ENCODE measurements at regions of chr10 and their contacts with region 1.

Region 1: GRCh38 chr10:129971381-129972144 is 7.5 kb upstream of the EBF3 start:
- DNase-seq: no peak
- ATAC-seq: peak; percentile 99
- H3K4me3 ChIP-seq: no peak overlapping the region
- H3K27ac ChIP-seq: no peak overlapping the region
- H3K4me1 ChIP-seq: no peaks in the 10 kb centered on the region
- H3K27me3 ChIP-seq: no peaks in the 10 kb centered on the region
- CTCF ChIP-seq: 0 out of 6 replicates have a peak, but pooled peaks of 1 of the 3 experiments have one; percentile 9
- POLR2A ChIP-seq: no peak
- RAD21 ChIP-seq: peak; percentile 44

Region 2: DNA sequence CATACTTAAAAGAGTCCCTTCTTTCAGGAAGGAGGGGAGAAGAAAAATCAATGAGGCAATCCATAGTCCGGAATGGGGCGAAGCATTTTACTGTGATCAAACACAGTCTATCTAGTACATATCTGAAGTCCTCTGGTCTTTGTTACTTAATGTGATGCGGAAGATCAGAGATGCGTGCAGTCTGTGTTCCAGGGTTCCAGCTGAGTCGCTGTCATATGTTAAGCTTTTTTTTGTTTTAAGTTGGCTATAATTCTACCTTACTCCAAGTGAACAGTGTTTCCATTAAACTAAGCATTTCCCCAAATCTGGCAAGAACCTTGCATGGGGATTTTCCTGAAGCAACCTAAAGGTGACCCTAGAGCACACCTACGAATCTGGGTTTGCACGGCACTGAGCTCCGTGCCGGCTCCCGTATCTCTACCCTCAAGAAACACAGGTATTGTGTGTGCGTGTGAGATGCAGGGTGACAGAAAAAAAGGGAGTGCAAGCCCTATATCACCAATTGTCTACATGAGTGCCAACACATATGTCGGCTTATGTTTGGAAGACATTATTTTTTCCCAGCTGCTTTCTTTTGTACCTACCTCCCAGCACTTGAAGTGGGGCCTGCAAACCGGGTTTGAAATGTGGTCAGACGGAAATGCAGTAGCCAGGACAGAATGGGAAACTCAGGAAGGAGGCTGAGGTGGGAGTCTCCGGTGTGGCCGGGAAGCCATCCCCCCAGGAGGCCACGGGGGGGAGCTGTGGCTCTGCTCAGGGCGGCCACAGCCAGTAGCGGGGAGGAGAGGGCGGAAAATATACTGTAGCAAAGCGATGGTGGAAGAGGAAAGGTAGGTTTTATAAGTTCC is 940.3 kb before region 1 on chr10:
- CTCF ChIA-PET with region 1: no interaction called
- POLR2A ChIA-PET with region 1: no interaction called
- RAD21 ChIA-PET with region 1: no interaction called
- intact Hi-C with region 1: loop called (anchors 5 kb)
- DNase-seq: no peak
- ATAC-seq: peak; percentile 94
- H3K4me3 ChIP-seq: no peak overlapping the region
- H3K27ac ChIP-seq: no peak overlapping the region
- H3K4me1 ChIP-seq: no peaks in the 10 kb centered on the region
- H3K27me3 ChIP-seq: no peaks in the 10 kb centered on the region; the same call in 1 of the 2 replicates
- CTCF ChIP-seq: peak; percentile 45 to 96 (median 83); a peak in 5 of 6 replicates
- POLR2A ChIP-seq: no peak
- RAD21 ChIP-seq: peak; percentile 85

Region 3: GRCh38 chr10:129768437-129769355 is 202.9 kb before region 1 on chr10:
- CTCF ChIA-PET with region 1: no interaction called
- POLR2A ChIA-PET with region 1: no interaction called
- RAD21 ChIA-PET with region 1: no interaction called
- intact Hi-C with region 1: no loop called
- DNase-seq: no peak
- ATAC-seq: no peak
- H3K4me3 ChIP-seq: no peak overlapping the region
- H3K27ac ChIP-seq: no peak overlapping the region
- H3K4me1 ChIP-seq: no peaks in the 10 kb centered on the region
- H3K27me3 ChIP-seq: no peaks in the 10 kb centered on the region
- CTCF ChIP-seq: no peak
- POLR2A ChIP-seq: no peak
- RAD21 ChIP-seq: no peak

Region 4: DNA sequence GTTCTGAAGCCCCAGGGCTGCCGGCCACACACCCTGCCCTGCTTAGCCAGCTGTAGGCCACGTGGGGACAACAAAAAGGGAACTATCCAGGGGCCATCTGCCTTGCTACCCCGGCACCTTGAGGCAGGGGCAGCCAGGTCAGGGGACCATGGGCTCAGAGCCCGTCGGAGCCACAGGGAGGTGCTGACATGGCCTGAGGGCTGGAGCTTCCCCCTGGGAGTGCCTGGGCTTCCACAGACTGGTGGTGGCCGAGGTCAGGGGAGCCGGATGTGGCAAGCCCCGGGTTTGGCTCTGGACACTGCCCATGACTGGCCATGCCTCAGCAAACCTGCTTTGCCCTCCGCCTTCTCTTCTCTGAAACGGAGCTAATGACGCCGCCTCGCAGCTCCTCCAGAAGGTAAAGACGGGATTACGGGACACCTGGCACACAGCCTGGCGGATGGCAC is 186.0 kb before region 1 on chr10:
- CTCF ChIA-PET with region 1: no interaction called
- POLR2A ChIA-PET with region 1: no interaction called
- RAD21 ChIA-PET with region 1: no interaction called
- intact Hi-C with region 1: no loop called
- DNase-seq: no peak
- ATAC-seq: no peak
- H3K4me3 ChIP-seq: no peak overlapping the region
- H3K27ac ChIP-seq: no peak overlapping the region
- H3K4me1 ChIP-seq: no peaks in the 10 kb centered on the region
- H3K27me3 ChIP-seq: no peaks in the 10 kb centered on the region
- CTCF ChIP-seq: no peak
- POLR2A ChIP-seq: no peak
- RAD21 ChIP-seq: no peak

Region 5: GRCh38 chr10:129877773-129878371 is 93.7 kb before region 1 on chr10:
- CTCF ChIA-PET with region 1: no interaction called
- POLR2A ChIA-PET with region 1: no interaction called
- RAD21 ChIA-PET with region 1: no interaction called
- intact Hi-C with region 1: loop called (anchors 10 kb)
- DNase-seq: no peak
- ATAC-seq: peak; percentile 97
- H3K4me3 ChIP-seq: no peak overlapping the region
- H3K27ac ChIP-seq: no peak overlapping the region
- H3K4me1 ChIP-seq: no peaks in the 10 kb centered on the region
- H3K27me3 ChIP-seq: 0 out of 2 replicates have a peak, but pooled peaks cover 4% of the 10 kb centered on the region
- CTCF ChIP-seq: peak; percentile 38 to 74 (median 61); a peak in 5 of 6 replicates
- POLR2A ChIP-seq: no peak
- RAD21 ChIP-seq: peak; percentile 37; the same call in 1 of the 2 replicates

Region 6: GRCh38 chr10:129958148-129958628 is 13.4 kb before region 1 on chr10:
- CTCF ChIA-PET with region 1: no interaction called
- POLR2A ChIA-PET with region 1: no interaction called
- RAD21 ChIA-PET with region 1: no interaction called
- intact Hi-C with region 1: no loop called
- DNase-seq: no peak
- ATAC-seq: no peak
- H3K4me3 ChIP-seq: no peak overlapping the region
- H3K27ac ChIP-seq: no peak overlapping the region
- H3K4me1 ChIP-seq: no peaks in the 10 kb centered on the region
- H3K27me3 ChIP-seq: no peaks in the 10 kb centered on the region
- CTCF ChIP-seq: no peak
- POLR2A ChIP-seq: no peak
- RAD21 ChIP-seq: no peak

Region 7: GRCh38 chr10:130179640-130180039 is 208.1 kb after region 1 on chr10:
- CTCF ChIA-PET with region 1: no interaction called
- POLR2A ChIA-PET with region 1: no interaction called
- RAD21 ChIA-PET with region 1: no interaction called
- intact Hi-C with region 1: loop called (anchors 5 kb)
- DNase-seq: peak; percentile 24
- ATAC-seq: peak; percentile 79
- H3K4me3 ChIP-seq: no peak overlapping the region
- H3K27ac ChIP-seq: no peak overlapping the region
- H3K4me1 ChIP-seq: no peaks in the 10 kb centered on the region
- H3K27me3 ChIP-seq: no peaks in the 10 kb centered on the region
- CTCF ChIP-seq: peak; percentile 29 to 36 (median 33); a peak in 5 of 6 replicates
- POLR2A ChIP-seq: no peak
- RAD21 ChIP-seq: peak; percentile 64; the same call in 1 of the 2 replicates